ENCODE measurements at regions of chr19 and their contacts with region 1.

Region 1: GRCh38 chr19:41206926-41207750 is 11.9 kb upstream of the AXL start:
- DNase-seq: peak; percentile 22 to 30
- H3K4me3 ChIP-seq: no peak overlapping the region
- H3K27ac ChIP-seq: peak overlapping the region in 2 of 3 donors; percentile 4 to 10
- H3K4me1 ChIP-seq: no peaks in the 10 kb centered on the region
- H3K27me3 ChIP-seq: no peaks in the 10 kb centered on the region
- CTCF ChIP-seq: no peak
- POLR2A ChIP-seq: no peak

Region 2: DNA sequence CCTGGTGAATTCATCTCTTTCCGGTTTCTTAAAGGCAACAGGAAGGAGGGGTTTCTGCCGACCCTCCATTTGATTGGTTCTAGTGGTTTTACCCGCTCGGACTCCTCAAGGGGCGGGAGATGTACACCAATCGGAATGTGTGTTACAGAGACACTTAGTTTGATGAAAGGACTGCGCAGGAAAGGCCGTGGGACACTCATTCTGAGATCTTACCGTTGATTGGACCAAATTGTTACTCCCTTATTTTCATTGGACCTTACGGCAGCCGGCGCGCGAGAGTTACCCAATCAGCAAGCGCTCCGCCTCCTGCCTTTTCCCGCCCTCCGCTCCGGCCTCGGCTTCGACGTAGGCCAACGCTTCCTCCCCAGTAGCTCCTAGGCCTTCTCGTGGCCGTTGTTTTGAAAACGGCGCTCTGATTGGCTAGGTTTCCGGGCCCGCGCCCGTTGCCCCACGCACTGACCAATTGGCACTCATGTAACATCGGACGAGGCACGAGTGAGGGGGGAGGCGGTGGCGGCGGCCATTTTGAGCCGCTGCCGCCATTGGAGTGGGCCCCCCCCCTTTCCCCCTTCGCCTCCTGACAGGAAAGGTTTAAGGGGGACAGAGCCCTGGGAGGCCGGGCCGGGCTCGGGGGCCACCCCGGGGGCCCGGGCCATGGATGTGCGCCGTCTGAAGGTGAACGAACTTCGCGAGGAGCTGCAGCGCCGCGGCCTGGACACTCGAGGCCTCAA is 56.9 kb after region 1 on chr19 and contains the start of gene HNRNPUL1:
- intact Hi-C with region 1: loop called (anchors 5 kb)
- DNase-seq: peak; percentile 99
- H3K4me3 ChIP-seq: peak within 1 kb of the TSS; percentile 80 to 98 (median 96)
- H3K27ac ChIP-seq: peak within 1 kb of the TSS; percentile 98 to 99 (median 98)
- H3K4me1 ChIP-seq: peaks cover 13 to 22% of the 10 kb centered on the region in 2 donors
- H3K27me3 ChIP-seq: no peaks in the 10 kb centered on the region
- CTCF ChIP-seq: peak in 1 of 6 experiments; percentile 15
- POLR2A ChIP-seq: peak in 1 of 2 donors; percentile 52
- total RNA-seq, gene HNRNPUL1: 129 to 180 (median 150) TPM

Region 3: DNA sequence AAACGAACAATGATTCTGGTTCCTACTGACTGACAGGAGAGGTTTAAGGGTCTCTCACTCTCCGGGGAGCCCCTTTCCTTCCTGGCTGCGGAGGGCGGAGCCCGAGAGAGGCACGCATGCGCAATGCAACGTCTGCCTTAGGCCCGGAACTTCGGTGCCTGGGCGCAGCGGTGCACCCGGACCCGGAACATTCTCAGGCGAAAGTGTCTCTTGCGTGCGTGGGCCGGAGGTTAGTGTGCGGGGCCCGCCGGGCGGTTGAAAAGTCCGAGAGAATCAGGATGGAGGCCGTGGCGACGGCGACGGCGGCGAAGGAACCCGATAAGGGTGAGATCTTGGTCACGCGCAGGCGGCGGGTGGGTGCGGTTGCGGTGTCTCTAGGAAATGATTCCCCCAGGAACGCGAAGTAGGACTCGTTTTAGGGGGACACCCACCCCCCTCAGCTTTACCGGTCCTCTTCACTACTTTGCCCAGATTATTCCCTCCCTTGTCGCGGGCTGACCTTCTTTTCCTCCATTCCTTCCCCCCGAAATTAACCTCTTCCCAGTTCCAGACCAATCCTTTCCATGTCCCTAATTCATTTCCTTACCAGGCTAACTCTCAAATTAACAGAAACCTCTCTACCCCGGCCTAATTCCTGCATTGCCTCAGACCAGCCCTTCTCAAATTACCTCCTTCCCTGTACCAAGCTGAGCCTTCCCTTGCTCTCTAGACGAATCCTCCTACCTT is 103.1 kb after region 1 on chr19 and contains the start of gene CCDC97:
- intact Hi-C with region 1: loop called (anchors 5 kb)
- DNase-seq: peak; percentile 84 to 86
- H3K4me3 ChIP-seq: peak within 1 kb of the TSS; percentile 51 to 66 (median 56)
- H3K27ac ChIP-seq: peak within 1 kb of the TSS; percentile 91 to 95 (median 94)
- H3K4me1 ChIP-seq: peaks cover 23 to 32% of the 10 kb centered on the region in 2 donors
- H3K27me3 ChIP-seq: no peaks in the 10 kb centered on the region
- CTCF ChIP-seq: no peak
- POLR2A ChIP-seq: peak in 1 of 2 donors; percentile 69
- total RNA-seq, gene CCDC97: 10.6 to 22.0 (median 19.3) TPM

Region 4: GRCh38 chr19:41439441-41440222 is 232.5 kb after region 1 on chr19 and contains the start of gene DMAC2:
- intact Hi-C with region 1: loop called (anchors 10 kb)
- DNase-seq: peak; percentile 99
- H3K4me3 ChIP-seq: peak within 1 kb of the TSS; percentile 51 to 76 (median 64)
- H3K27ac ChIP-seq: peak within 1 kb of the TSS; percentile 69 to 81 (median 80)
- H3K4me1 ChIP-seq: peaks cover 6 to 14% of the 10 kb centered on the region in 2 donors
- H3K27me3 ChIP-seq: no peaks in the 10 kb centered on the region
- CTCF ChIP-seq: peak in 5 of 6 experiments; percentile 23 to 66 (median 52)
- POLR2A ChIP-seq: peak in 1 of 2 donors; percentile 74
- total RNA-seq, gene DMAC2: 39.1 to 53.1 (median 44.2) TPM

Measured in thyroid gland (tissue), 4 donors.